Activated CD4-positive, alpha-beta memory T cell treated with anti-CD3 and anti-CD28 coated beads for 36 hours (primary cell): ENCODE measurements at regions of chr15 and their contacts with region 1.

Region 1: DNA sequence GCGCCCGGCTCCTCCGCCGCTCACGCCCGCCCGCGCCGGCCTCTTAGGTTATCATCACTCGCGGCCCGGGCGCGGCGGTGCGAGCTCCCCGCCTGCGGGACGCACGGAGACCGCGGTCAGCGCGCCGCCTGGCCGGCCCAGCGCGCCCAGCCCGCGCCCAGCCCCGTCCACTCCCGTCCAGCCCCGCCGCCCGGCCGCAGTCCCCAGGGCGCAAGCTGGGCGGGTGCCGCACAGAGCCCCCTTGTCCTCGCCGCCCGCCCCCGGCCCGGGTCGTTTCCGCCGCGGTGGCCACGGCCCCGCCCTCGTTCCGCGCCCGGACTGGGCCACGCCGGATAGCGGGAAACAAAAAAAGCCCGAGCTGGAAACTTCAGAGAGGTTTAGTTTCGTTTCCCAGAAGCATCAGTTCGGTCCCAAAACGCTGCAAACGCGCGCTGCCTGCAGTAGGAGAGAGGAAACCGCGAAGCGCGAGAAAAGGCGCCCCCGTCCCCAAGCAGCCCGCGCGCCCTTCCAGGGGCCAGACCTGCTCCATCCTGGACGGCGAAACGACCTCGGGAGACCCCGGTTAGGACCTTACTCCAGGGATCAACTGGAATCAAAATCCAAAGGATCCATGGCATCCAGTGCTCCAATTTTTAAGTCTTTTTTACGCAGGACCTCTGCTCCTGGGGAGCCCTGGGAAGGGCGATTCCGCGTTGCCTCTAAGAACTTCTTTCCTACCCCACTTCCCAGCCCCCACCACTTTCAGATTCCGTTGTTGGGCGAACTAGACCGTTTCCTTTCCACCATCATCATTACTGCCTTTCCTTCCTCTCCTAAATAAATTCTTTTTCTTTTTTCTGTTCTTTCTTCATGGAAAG is at the start of gene ATP10A:
- DNase-seq: peak; percentile 66
- H3K4me3 Mint-ChIP-seq: peak within 1 kb of the TSS; percentile 90
- H3K27ac Mint-ChIP-seq: peak within 1 kb of the TSS; percentile 86
- H3K4me1 Mint-ChIP-seq: peaks cover 34% of the 10 kb centered on the region
- H3K27me3 Mint-ChIP-seq: no peaks in the 10 kb centered on the region
- total RNA-seq, gene ATP10A: 15.9 to 17.2 TPM

Region 2: DNA sequence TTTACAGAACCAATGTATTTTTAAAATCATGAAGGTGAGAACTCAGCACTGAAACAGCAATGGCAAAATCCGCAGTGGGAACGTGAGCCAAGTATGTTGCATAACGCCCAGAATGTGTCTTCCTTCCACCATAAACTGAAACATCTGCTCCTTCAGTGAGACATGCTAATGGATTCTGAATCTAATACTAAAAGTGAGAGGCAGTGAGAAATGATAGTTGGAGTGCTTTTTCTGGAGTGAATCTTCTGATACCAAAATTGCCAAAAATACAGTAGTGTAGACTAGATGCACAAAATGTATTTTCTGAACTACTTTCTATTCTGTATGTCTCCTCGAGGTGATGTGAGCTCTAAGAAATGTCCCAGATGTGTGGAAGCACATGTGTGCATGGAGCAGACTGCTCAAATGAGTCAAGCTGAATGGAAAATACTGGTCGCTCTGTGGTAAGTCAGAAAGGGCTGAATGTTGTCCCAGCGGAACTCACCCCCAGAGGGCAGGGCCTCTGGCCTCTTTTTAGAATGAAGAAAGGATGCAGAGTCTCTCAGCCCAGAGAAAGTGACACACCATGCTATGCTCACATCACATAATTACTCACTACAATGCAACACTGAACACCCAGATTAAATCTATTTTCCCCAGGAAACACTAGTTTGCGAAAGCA is 73.2 kb before region 1 on chr15:
- CTCF ChIA-PET with region 1: interaction called, 4 read pairs
- POLR2A ChIA-PET with region 1: no interaction called
- intact Hi-C with region 1: loop called (anchors 1 kb)
- DNase-seq: peak; percentile 75
- H3K4me3 Mint-ChIP-seq: peak overlapping the region; percentile 25
- H3K27ac Mint-ChIP-seq: peak overlapping the region; percentile 84
- H3K4me1 Mint-ChIP-seq: peaks cover 58% of the 10 kb centered on the region
- H3K27me3 Mint-ChIP-seq: no peaks in the 10 kb centered on the region

Region 3: GRCh38 chr15:25811481-25811906 is 51.8 kb before region 1 on chr15:
- CTCF ChIA-PET with region 1: no interaction called
- POLR2A ChIA-PET with region 1: no interaction called
- intact Hi-C with region 1: loop called (anchors 2 kb)
- DNase-seq: no peak
- H3K4me3 Mint-ChIP-seq: peak overlapping the region; percentile 22
- H3K27ac Mint-ChIP-seq: peak overlapping the region; percentile 57
- H3K4me1 Mint-ChIP-seq: peaks cover 61% of the 10 kb centered on the region
- H3K27me3 Mint-ChIP-seq: no peaks in the 10 kb centered on the region